Thyroid gland (tissue), 4 donors: ENCODE measurements at regions of chr10 and their contacts with region 1.

Region 1: DNA sequence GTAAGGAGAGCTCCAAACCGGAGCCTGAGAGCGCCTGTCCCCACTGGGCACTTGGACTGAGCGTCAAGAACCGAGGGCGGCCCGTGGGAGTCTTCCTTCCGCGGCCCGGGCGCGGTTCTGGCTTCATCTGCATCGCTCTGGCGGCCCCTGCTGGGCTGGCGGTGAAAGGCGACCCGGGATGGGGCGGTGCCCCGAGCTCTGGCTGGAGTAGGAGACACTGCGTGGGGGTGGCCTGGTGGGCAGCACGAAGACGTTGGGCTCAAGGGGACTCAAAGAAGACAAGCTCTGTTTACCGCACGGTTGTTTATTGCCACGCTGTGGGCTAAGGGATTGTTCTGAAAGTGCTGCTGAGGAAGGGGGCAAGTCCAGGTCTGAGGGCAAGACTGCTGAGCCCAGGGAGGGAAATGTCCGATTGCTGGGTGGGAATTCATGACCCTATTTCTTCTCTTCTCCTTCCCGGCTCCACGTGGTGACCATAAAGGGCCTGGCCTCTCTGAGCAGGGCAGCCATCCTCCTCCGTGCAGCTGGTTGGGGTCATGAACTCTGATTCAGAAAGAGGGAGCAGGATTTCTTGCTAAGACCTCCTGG is 29.8 kb downstream of the PLAU start:
- DNase-seq: peak; percentile 77 to 84
- H3K4me3 ChIP-seq: no peak overlapping the region
- H3K27ac ChIP-seq: no peak overlapping the region
- H3K4me1 ChIP-seq: peaks cover 0 to 21% of the 10 kb centered on the region in 2 donors
- H3K27me3 ChIP-seq: no peaks in the 10 kb centered on the region
- CTCF ChIP-seq: peak; percentile 85 to 96 (median 93)
- POLR2A ChIP-seq: no peak

Region 2: GRCh38 chr10:73848821-73849489 is 91.8 kb before region 1 on chr10:
- intact Hi-C with region 1: loop called (anchors 5 kb)
- DNase-seq: peak; percentile 81 to 83
- H3K4me3 ChIP-seq: no peak overlapping the region
- H3K27ac ChIP-seq: no peak overlapping the region
- H3K4me1 ChIP-seq: peaks cover 4 to 8% of the 10 kb centered on the region in 2 donors
- H3K27me3 ChIP-seq: no peaks in the 10 kb centered on the region
- CTCF ChIP-seq: peak; percentile 93 to 99 (median 97)
- POLR2A ChIP-seq: no peak

Region 3: GRCh38 chr10:73886085-73886529 is 54.6 kb before region 1 on chr10:
- intact Hi-C with region 1: loop called (anchors 2 kb)
- DNase-seq: peak; percentile 75 to 80
- H3K4me3 ChIP-seq: no peak overlapping the region
- H3K27ac ChIP-seq: peak overlapping the region; percentile 84 to 88 (median 85)
- H3K4me1 ChIP-seq: peaks cover 32 to 33% of the 10 kb centered on the region in 2 donors
- H3K27me3 ChIP-seq: no peaks in the 10 kb centered on the region
- CTCF ChIP-seq: peak; percentile 51 to 94 (median 83)
- POLR2A ChIP-seq: no peak

Region 4: DNA sequence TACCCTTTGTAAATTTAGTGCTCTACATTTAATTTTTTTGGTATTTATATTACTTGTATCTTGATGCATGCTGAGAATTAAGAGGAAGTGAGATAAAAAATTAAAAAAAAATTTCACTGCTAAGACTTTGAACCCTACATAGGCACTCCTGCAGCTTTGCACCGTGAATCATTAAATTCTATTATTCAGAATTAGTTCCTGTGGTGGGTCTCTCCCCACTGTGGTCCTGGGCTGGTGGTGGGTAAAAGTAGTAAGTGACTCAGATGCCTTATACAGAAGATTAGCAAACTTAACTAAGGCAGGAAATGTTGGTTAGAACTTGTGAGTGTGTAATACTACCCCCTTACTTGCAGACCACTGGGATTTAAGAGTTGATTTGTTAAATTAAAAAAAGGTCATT is 137.3 kb after region 1 on chr10:
- intact Hi-C with region 1: loop called (anchors 10 kb)
- DNase-seq: no peak
- H3K4me3 ChIP-seq: no peak overlapping the region
- H3K27ac ChIP-seq: no peak overlapping the region
- H3K4me1 ChIP-seq: no peaks in the 10 kb centered on the region
- H3K27me3 ChIP-seq: no peaks in the 10 kb centered on the region
- CTCF ChIP-seq: no peak
- POLR2A ChIP-seq: no peak